MCF 10A (cell line): ENCODE measurements at regions of chr21 and their contacts with region 1.

Region 1: DNA sequence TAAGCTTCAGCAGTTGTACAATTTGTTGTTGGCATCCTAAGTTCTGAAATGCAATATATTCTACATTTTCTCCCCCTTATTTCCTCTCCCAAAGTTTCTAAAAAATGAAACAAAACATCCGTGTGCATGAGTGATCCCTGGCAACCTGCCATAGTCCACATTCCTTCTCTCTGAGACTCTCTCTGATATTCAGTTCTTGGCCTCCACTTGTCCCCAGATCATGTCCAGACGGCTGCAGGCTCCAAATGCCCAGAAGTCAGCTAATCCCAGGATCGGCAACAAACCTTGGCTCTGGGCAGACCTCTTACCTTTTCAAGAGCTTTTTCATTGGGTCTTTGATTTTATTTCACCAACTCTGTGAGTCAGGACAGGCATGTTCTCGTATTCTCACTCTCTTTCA is 187.8 kb downstream of the ETS2 start:
- DNase-seq: peak; percentile 95
- H3K4me3 Mint-ChIP-seq: peak overlapping the region; percentile 11
- H3K27ac Mint-ChIP-seq: peak overlapping the region; percentile 94
- H3K4me1 Mint-ChIP-seq: peaks cover 34% of the 10 kb centered on the region
- H3K27me3 Mint-ChIP-seq: no peaks in the 10 kb centered on the region
- CTCF ChIP-seq: no peak

Region 2: DNA sequence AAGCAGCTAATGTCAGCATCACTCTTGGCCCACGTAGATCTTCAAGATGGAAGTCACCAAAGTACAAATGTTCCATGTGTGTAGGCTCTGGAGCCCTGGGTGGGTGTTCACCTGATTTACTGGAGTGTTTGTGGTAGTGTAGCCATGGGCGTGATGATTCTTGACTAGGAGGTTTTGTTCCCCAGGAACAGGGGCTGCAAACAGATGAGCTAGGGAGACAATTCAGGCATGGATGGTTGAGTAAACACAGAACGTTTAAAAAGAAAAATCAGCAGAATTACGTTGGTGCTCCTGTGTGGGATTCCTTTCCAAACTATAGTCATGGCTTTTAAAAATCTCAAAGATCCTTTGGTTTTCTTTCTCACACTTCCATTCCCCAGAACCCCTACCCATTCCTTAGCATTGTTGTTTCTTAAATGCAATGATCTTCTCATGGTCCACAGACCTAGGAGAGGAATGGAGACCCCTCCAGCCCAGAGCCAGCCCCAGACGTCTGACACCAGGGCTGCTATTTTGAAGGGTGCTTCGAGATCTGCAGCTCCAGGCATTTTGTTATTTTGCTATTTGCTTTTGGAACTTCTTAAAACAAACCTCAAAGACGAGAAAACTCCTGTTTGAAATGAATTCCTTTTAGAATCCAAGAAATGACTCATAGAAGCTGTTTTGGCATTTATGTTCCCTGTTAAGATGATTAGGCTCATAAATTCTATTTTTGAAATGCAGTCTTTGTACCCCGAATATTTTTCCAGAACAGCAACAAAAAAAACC is 72.7 kb before region 1 on chr21:
- CTCF ChIA-PET with region 1: no interaction called
- POLR2A ChIA-PET with region 1: interaction called, 11 read pairs
- intact Hi-C with region 1: no loop called
- DNase-seq: peak; percentile 49
- H3K4me3 Mint-ChIP-seq: peak overlapping the region; percentile 41
- H3K27ac Mint-ChIP-seq: peak overlapping the region; percentile 88
- H3K4me1 Mint-ChIP-seq: peaks cover 30% of the 10 kb centered on the region
- H3K27me3 Mint-ChIP-seq: no peaks in the 10 kb centered on the region
- CTCF ChIP-seq: no peak

Region 3: DNA sequence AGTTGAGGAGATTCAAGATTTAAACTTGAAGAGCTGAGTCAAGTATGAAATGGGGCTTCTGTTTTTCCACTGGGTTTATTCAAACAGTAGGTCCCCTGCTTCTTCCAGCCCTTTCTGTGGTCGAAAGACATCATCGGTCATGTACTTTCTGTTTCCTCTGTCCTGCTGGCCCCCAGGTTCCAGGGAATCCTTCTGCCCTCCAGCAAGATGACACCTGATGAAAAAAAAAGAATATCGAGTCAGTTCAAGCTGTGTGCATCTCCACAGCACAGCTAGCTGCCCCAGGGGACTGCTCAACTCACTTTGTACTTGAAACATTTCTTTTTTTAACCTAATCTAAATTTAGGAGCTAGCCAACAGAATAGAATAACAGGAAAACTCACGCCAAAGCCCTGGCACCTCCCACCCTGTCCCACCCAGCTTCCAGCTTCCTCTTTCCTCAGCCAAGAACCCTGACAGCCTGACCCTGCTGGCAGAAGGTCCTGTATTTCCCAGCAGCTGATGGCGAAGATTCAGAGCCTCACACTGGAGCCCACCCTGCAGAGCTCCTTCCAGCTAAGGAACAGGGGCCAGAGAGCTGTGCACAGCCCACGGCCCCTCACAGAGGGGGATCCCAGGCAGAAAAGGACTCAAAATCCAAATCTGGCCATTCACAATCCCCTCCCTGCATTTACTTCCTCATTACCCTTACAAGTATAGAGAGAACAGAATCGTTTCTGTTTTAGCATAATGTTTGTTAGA is 13.2 kb after region 1 on chr21:
- CTCF ChIA-PET with region 1: no interaction called
- POLR2A ChIA-PET with region 1: interaction called, 23 read pairs
- intact Hi-C with region 1: no loop called
- DNase-seq: peak; percentile 54
- H3K4me3 Mint-ChIP-seq: no peak overlapping the region
- H3K27ac Mint-ChIP-seq: peak overlapping the region; percentile 84
- H3K4me1 Mint-ChIP-seq: peaks cover 25% of the 10 kb centered on the region
- H3K27me3 Mint-ChIP-seq: no peaks in the 10 kb centered on the region
- CTCF ChIP-seq: no peak

Region 4: GRCh38 chr21:39313571-39314142 is 320.1 kb after region 1 on chr21 and contains the start of gene BRWD1:
- CTCF ChIA-PET with region 1: no interaction called
- POLR2A ChIA-PET with region 1: no interaction called
- intact Hi-C with region 1: no loop called
- DNase-seq: peak; percentile 78
- H3K4me3 Mint-ChIP-seq: peak within 1 kb of the TSS; percentile 76
- H3K27ac Mint-ChIP-seq: peak within 1 kb of the TSS; percentile 94
- H3K4me1 Mint-ChIP-seq: peaks cover 20% of the 10 kb centered on the region
- H3K27me3 Mint-ChIP-seq: no peaks in the 10 kb centered on the region
- CTCF ChIP-seq: no peak
- total RNA-seq, gene BRWD1: 36.0 and 45.4 TPM in 2 replicates